Testis (tissue), 5 donors: ENCODE measurements at regions of chr12 and their contacts with region 1.

Region 1: GRCh38 chr12:110468212-110469048 is at the starts of genes FAM216A and GPN3:
- DNase-seq: peak; percentile 98
- H3K4me3 ChIP-seq: peak within 1 kb of the TSS; percentile 74 to 83
- H3K27ac ChIP-seq: peak within 1 kb of the TSS; percentile 85 to 91
- H3K4me1 ChIP-seq: peaks cover 10% of the 10 kb centered on the region
- H3K27me3 ChIP-seq: no peaks in the 10 kb centered on the region
- CTCF ChIP-seq: peak in 1 of 3 experiments; percentile 22
- POLR2A ChIP-seq: peak; percentile 40
- total RNA-seq, gene FAM216A: 39.7 to 45.6 TPM
- total RNA-seq, gene GPN3: 41.8 to 55.5 TPM

Region 2: GRCh38 chr12:110224379-110225304 is 243.8 kb before region 1 on chr12:
- intact Hi-C with region 1: no loop called
- DNase-seq: no peak
- H3K4me3 ChIP-seq: no peak overlapping the region
- H3K27ac ChIP-seq: peak overlapping the region; percentile 72 to 74
- H3K4me1 ChIP-seq: peaks cover 39% of the 10 kb centered on the region
- H3K27me3 ChIP-seq: no peaks in the 10 kb centered on the region
- CTCF ChIP-seq: peak; percentile 23 to 54 (median 41)
- POLR2A ChIP-seq: no peak

Region 3: GRCh38 chr12:110590806-110591326 is 122.4 kb after region 1 on chr12:
- intact Hi-C with region 1: loop called (anchors 10 kb)
- DNase-seq: no peak
- H3K4me3 ChIP-seq: no peak overlapping the region
- H3K27ac ChIP-seq: peak overlapping the region in 1 of 2 donors; percentile 67
- H3K4me1 ChIP-seq: peaks cover 16% of the 10 kb centered on the region
- H3K27me3 ChIP-seq: no peaks in the 10 kb centered on the region
- CTCF ChIP-seq: no peak
- POLR2A ChIP-seq: no peak

Region 4: DNA sequence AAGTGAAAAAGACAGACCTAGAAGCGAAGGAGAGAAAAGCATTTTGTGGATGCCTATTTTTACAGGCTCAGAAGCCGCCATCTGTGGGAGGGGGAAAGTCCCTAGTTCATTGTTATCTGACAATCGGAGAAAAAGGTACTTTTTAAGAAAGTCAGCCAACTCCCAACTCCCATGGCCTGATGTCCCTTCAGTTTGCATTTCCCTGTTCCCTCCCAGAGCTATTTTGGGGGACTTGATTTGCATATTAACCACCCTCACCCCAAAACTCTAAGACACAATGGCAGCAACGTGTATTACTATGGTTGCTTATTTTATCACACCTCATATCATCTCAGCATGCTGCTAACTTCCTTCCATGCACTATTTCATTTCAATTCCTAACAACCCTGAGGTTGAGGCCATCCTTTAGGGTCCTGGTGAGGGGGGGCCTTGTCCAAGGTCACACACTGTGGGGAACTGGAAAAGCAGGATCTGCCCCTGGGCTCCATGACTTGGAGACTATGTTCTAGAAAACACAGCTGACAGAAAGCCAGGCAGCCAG is 201.8 kb after region 1 on chr12:
- intact Hi-C with region 1: no loop called
- DNase-seq: no peak
- H3K4me3 ChIP-seq: no peak overlapping the region
- H3K27ac ChIP-seq: no peak overlapping the region
- H3K4me1 ChIP-seq: no peaks in the 10 kb centered on the region
- H3K27me3 ChIP-seq: no peaks in the 10 kb centered on the region
- CTCF ChIP-seq: no peak
- POLR2A ChIP-seq: no peak